ENCODE measurements at regions of chr5 and their contacts with region 1.

Region 1: GRCh38 chr5:108345541-108346171 is 36.2 kb downstream of the FBXL17 start:
- DNase-seq: no peak

Region 2: GRCh38 chr5:108193021-108193795 is 152.4 kb before region 1 on chr5:
- intact Hi-C with region 1: no loop called
- DNase-seq: no peak

Region 3: GRCh38 chr5:108260117-108260857 is 85.4 kb before region 1 on chr5:
- intact Hi-C with region 1: loop called (anchors 2 kb)
- DNase-seq: no peak

Region 4: DNA sequence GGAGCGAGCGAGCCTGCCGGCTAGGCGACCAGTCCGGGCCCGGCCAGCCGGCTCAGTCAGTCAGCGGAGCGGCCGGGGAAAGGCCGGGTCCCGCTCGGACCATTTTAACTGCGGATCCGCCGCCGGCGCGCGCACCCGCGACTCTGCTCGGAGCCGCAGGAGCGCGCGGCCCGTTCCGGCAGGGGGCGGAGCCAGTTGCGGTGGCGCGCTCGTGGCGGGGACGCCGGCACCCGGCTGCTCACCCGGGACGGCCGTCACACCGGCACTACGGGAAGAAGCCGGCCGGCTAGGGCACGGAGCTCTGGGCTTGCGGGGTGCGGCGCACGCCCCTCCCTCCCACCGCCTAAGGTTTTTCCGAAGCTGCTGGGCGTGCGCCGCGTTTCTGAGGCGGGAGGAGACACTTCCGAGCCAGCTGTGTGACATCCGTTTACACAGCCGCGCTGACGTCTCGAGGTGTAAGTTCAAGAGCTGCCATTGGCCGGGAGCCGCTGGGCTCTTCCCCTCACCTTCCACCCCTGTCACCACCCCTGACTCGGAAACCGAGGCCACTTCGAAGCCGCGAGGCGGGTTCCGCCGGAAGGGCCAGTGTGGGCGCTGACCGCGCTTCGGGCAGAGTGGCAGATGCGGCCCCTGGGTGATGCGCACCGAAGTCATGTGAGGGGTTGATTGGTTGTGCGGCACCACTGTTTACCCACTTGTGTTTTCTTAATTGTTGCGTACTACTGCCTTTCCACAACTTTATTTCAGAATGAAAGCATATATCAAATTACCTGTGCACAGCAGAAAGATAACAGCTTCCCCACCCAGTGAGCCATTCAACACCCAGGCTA is 36.5 kb after region 1 on chr5 and contains the start of gene FBXL17:
- intact Hi-C with region 1: no loop called
- DNase-seq: peak; percentile 98
- total RNA-seq, gene FBXL17: 27.3 TPM